ENCODE measurements at regions of chr16 and their contacts with region 1.

Region 1: DNA sequence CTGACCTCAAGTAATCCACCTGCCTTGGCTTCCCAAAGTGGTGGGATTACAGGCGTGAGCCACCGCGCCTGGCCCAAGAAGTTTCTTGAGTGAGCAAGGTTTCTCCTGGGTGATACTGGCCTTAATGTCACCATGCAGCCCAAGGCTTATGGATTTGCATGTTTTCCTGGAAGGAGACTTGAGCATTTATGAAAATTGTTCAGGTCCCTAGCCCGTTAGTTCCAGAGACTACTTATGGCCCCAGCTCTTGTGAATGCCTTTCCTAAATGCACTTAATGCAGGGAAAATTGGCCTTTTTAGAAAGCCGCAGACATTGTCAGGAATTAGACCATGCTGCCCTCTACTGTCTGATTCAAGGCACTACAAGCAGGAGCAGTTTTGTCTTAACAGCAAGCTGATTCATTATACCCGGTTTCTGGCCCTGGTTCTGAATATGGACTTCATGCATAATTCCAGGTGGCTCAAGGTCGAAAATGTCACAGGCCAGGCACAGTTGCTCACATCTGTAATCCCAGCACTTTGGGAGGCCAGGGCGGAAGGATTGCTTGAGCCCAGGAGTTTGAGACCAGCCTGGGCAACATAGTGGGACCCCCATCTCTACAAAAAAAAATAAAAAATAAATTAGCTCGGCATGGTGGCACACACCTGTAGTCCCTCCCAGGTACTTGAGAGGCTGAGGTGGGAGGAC is 91.3 kb downstream of the SNX29 start:
- DNase-seq: peak; percentile 78
- H3K4me3 ChIP-seq: no peak overlapping the region
- H3K27ac ChIP-seq: no peak overlapping the region
- H3K27me3 ChIP-seq: no peaks in the 10 kb centered on the region
- CTCF ChIP-seq: peak; percentile 92

Region 2: DNA sequence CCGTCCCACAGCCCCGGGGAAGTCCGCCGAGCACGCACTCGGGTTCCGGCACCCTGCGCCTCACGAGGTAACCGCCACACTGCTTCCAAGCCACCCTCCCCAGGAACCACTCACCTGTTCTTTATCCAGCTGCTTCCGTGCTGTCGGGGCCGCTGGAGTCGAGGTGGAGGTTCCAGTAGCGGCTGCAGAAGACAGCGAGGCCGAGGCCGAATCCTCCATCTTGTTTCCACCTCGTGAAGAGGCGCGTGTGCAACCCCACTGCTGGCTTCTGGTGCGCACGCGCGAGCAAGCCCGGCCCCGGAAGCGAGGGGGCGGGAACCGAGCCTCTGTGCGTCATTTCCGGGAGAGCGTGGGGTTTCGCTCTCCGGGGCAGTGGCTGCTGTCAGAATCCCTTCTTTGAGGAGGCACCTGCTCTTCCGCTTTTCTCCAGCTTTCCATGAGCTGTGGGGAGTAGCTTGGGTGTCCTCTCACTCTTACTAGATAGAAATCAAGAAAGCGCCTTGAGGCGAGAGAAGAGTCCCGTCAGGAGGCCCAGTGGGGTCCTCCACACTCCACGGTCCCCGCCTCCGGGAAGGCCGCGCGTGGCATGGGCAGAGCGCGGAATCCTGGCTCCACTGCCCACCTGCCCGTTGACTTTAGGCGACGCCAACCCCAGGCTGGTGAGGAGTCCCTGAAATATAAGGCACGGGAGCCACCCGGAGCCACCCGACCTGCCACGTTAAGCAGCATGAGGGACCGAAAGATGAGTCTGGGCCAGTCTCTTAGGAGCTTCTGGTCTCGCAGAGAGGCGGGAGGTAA is 216.4 kb before region 1 on chr16 and contains the start of gene RSL1D1:
- CTCF ChIA-PET with region 1: interaction called, 19 read pairs
- POLR2A ChIA-PET with region 1: no interaction called
- DNase-seq: peak; percentile 74
- H3K4me3 ChIP-seq: peak within 1 kb of the TSS; percentile 99
- H3K27ac ChIP-seq: peak within 1 kb of the TSS; percentile 78
- H3K27me3 ChIP-seq: no peaks in the 10 kb centered on the region
- CTCF ChIP-seq: no peak
- polyA plus RNA-seq, gene RSL1D1: 106 and 169 TPM in 2 replicates

Region 3: DNA sequence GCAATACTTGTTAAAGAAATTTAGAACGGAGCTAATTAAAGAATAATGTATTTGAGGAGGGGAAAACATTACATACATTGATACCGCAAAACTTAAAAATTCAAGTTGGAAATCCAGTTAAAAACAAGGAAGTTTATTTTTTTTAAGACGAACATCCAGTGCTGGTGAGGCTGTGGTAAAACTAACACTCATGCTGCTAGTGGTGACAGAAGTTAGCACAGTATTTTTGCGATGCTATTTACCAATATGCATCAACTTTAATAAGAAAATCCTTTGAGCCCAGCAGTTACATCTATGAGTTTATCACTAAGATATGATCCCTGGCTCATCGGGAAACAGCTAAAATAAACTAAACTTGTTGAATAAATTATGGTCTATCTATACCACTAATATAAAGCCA is 183.8 kb before region 1 on chr16:
- CTCF ChIA-PET with region 1: interaction called, 18 read pairs
- POLR2A ChIA-PET with region 1: no interaction called
- DNase-seq: no peak
- H3K4me3 ChIP-seq: no peak overlapping the region
- H3K27ac ChIP-seq: no peak overlapping the region
- H3K27me3 ChIP-seq: no peaks in the 10 kb centered on the region
- CTCF ChIP-seq: no peak

Region 4: GRCh38 chr16:11949527-11949926 is 118.3 kb before region 1 on chr16:
- CTCF ChIA-PET with region 1: interaction called, 32 read pairs
- POLR2A ChIA-PET with region 1: no interaction called
- DNase-seq: no peak
- H3K4me3 ChIP-seq: no peak overlapping the region
- H3K27ac ChIP-seq: no peak overlapping the region
- H3K27me3 ChIP-seq: no peaks in the 10 kb centered on the region
- CTCF ChIP-seq: peak; percentile 44

Region 5: DNA sequence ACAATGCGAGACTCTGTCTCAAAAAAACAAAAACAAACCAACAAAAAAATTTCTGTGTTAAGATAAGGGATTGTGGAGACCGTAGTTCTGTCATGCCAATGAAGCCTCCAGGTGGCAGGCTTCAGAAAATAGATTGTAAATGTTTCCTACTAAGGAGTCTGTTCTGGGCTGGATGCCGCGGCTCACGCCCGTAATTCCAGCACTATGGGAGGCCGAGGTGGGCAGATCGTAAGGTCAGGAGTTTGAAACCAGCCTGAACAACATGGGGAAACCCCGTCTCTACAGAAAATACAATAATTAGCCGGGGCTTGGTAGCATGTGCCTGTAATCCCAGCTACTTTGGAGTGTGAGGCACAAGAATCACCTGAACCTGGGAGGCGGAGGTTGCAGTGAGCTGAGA is 95.7 kb before region 1 on chr16:
- CTCF ChIA-PET with region 1: interaction called, 26 read pairs
- POLR2A ChIA-PET with region 1: interaction called, 9 read pairs
- DNase-seq: no peak
- H3K4me3 ChIP-seq: no peak overlapping the region
- H3K27ac ChIP-seq: no peak overlapping the region
- H3K27me3 ChIP-seq: no peaks in the 10 kb centered on the region
- CTCF ChIP-seq: peak; percentile 43

Region 6: DNA sequence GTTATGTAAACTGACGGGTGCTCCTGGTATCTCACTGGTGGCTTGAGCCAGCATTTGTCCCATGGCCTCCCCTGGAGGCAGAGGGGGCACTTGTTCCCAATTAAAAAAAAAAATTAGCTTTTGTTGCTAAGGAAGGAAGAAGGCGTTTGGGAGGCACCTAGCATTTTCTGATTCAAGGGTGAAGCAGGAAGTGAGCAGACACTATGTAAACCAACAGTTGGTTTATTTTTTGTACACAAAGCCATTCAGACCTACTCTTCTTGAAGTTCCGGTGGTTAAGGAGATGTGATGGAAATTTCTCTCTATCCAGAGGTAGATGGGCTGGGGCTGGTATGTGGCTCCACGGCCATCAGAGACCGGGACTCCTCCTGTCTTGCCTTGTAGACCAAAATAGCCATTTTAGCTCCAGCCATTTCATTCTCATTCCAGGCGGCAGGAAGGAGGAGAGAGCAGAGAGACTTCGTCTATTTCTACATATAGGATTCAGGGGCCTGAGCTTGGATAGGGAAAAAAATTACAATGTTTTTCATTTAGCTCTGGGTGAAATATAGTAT is 11.6 kb after region 1 on chr16:
- CTCF ChIA-PET with region 1: interaction called, 12 read pairs
- POLR2A ChIA-PET with region 1: no interaction called
- DNase-seq: no peak
- H3K4me3 ChIP-seq: no peak overlapping the region
- H3K27ac ChIP-seq: no peak overlapping the region
- H3K27me3 ChIP-seq: no peaks in the 10 kb centered on the region
- CTCF ChIP-seq: no peak